Posterior cingulate gyrus (tissue), 11 donors: ENCODE measurements at regions of chr6 and their contacts with region 1.

Region 1: GRCh38 chr6:132530293-132530974 is 7.6 kb upstream of the TAAR9 start:
- DNase-seq: peak in 5 of 10 donors; percentile 11 to 72 (median 65)

Region 2: GRCh38 chr6:131858765-131859415 is 671.5 kb before region 1 on chr6:
- intact Hi-C with region 1: no loop called
- DNase-seq: no peak

Region 3: GRCh38 chr6:132607544-132608233 is 77.3 kb after region 1 on chr6:
- intact Hi-C with region 1: loop called (anchors 10 kb)
- DNase-seq: no peak

Region 4: DNA sequence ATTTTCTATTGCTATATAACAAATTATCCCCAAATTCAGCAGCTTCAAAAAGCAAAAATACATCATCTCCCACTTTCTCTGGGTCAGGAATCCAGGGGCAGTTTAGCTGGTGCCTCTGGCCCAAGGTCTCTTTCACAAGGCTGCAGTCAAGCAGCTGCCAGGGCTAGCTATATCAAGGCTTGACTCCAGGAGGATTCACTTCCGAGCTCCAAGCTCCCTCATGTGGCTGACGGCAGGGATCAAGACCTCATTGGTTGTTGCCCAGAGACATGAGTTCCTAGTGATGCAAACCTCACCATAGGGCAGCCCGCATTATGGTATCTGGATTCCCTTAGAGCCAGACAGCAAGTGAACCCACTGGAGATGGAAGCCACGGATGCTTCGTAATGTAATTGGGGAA is 184.8 kb after region 1 on chr6:
- intact Hi-C with region 1: loop called (anchors 1 kb)
- DNase-seq: peak in 8 of 10 donors; percentile 16 to 94 (median 58)

Region 5: GRCh38 chr6:132813173-132813856 is 282.9 kb after region 1 on chr6:
- intact Hi-C with region 1: loop called (anchors 5 kb)
- DNase-seq: peak in 5 of 10 donors; percentile 12 to 86 (median 28)

Region 6: DNA sequence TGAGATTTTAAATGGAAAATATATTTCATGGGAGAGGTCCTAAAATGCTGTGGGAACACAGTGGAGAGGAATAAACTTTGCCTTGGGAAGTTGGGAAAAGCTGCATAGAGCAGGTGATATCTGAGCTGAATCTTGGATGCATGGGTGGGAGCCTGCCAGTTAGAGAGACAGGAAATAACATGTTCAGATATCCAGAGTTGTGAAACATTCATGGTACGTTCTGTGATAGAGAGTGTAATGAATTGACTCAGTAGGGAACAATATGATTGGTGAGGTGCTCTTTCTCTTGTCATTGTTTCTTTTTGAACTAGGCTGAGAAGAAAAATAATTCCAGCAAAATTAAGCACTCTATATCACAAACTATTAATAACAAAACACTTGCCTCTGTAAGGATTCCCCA is 356.8 kb after region 1 on chr6:
- intact Hi-C with region 1: no loop called
- DNase-seq: no peak

Region 7: DNA sequence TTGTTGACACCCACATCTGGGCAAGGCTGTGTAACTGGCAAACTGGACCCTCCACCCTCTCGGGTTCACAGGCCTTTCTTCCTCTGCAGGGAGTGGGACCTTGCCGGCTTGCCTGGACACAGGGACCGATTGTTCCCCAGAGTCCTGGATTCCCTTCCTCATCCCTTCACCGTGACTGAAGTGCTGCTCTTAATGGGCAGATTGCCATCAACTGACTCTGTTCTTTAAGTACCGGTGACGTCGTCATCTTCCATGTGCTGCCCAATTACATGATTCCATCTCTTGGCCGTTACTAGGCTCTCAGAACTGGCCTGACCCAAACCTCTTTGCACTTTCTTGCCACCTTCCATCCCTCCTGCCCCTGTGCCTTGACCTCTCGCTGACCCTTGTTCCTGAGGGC is 796.1 kb after region 1 on chr6:
- intact Hi-C with region 1: no loop called
- DNase-seq: no peak